Mammary epithelial cell (primary cell): ENCODE measurements at regions of chr2 and their contacts with region 1.

Region 1: DNA sequence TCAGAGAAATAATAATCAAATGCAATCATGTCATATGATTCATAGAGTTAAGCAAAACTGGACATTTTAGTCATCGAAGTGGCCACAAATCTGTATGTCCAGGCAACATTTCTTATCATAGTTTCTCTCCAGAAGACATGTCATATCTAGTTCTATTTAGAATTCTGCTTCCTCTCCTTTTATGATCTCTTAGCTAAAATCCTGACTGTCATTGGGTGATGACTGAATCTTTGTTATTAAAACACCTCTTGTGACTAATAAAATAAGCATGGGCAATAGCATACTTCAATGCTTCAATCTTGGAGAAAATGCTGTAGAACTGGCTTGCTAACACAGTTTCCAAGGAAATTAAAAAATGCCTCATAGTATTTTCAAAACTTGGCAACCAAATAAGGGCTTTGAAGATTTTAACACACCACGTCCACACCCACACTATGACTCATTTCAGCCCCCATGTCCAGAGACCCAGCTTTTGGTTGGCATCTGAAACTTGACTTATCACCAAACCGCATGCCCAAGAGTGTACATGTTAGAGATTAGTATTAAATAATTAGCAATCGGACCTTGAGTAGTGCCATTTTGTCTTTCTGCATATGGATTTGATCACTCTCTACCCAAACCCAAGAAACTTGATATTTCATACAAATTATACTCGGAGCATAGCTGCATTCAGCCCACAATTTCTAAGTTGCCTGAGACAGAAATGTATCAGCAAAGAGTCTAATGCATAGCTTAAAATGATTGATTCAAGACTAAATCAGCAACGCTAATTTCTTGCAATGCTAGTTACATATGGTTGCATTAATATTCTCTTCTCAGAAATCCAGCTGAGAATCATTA is 106.5 kb upstream of the ETAA1 start:
- DNase-seq: peak; percentile 98
- H3K4me3 ChIP-seq: no peak overlapping the region
- H3K27ac ChIP-seq: peak overlapping the region; percentile 97
- H3K4me1 ChIP-seq: peaks cover 23% of the 10 kb centered on the region
- H3K27me3 ChIP-seq: no peaks in the 10 kb centered on the region
- CTCF ChIP-seq: no peak

Region 2: DNA sequence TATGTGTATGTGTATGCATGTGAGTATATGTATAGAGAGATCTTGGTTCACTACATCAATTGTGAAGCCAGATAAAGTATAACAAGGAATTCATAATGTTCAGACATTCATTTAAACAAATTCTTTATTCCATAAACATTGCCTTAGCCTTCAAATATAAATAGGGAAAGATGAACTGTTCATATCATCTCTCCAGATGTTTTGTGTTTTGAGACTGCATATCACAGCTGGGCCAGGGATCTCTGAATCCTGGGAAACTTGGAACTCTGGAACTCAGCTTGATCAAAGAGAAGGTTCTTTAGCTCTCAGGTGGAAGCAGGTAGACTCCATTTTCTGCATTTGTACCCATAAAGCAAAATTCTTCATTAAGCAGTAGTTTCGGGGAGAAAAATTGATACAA is 166.1 kb before region 1 on chr2:
- CTCF ChIA-PET with region 1: no interaction called
- dilution Hi-C with region 1: no loop called
- in situ Hi-C with region 1: no loop called
- intact Hi-C with region 1: no loop called
- DNase-seq: no peak
- H3K4me3 ChIP-seq: no peak overlapping the region
- H3K27ac ChIP-seq: no peak overlapping the region
- H3K4me1 ChIP-seq: no peaks in the 10 kb centered on the region
- H3K27me3 ChIP-seq: peaks cover 3% of the 10 kb centered on the region
- CTCF ChIP-seq: no peak

Region 3: DNA sequence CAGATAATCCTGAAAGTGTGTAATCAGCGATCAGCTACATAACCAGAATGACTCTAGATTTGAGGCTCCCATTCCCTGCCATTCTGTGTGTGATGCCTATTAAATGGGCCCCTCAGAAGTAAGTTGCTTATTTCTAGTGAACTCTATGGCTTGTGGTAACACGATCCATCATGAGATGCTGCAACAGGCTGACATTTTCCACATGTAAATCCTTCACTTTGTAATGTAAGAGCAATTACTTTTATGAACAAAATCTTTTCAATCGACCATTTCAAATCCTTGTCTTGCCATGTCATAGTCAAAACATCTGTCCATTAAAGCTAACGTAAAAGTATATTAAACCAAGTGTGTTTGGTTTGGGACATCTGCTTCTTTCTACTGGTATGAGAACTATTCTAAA is 69.4 kb before region 1 on chr2:
- CTCF ChIA-PET with region 1: no interaction called
- dilution Hi-C with region 1: no loop called
- in situ Hi-C with region 1: no loop called
- intact Hi-C with region 1: no loop called
- DNase-seq: no peak
- H3K4me3 ChIP-seq: no peak overlapping the region
- H3K27ac ChIP-seq: no peak overlapping the region
- H3K4me1 ChIP-seq: no peaks in the 10 kb centered on the region
- H3K27me3 ChIP-seq: no peaks in the 10 kb centered on the region
- CTCF ChIP-seq: no peak

Region 4: GRCh38 chr2:67259581-67260342 is 30.9 kb before region 1 on chr2:
- CTCF ChIA-PET with region 1: no interaction called
- dilution Hi-C with region 1: no loop called
- in situ Hi-C with region 1: no loop called
- intact Hi-C with region 1: loop called (anchors 1 kb)
- DNase-seq: peak; percentile 91
- H3K4me3 ChIP-seq: no peak overlapping the region
- H3K27ac ChIP-seq: peak overlapping the region; percentile 81
- H3K4me1 ChIP-seq: peaks cover 40% of the 10 kb centered on the region
- H3K27me3 ChIP-seq: no peaks in the 10 kb centered on the region
- CTCF ChIP-seq: no peak

Region 5: DNA sequence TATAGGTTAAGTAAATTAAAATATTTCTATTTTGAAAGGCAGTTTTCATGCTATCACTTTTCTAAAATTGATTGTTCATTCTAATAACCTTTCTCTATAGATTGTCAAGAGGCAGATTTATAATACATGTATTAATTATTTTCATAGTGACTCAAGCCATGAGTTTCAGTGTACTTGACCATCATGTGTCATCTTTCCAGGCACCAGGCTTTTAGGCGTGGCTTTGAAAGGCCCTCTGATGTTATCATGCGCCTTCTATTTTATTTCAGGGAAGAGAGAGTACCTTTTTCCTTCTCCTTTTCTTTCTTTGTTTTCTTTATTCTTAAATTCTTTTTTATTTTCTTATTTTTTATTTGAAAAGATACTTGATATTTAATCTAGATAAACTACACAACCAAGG is 21.9 kb before region 1 on chr2:
- CTCF ChIA-PET with region 1: no interaction called
- dilution Hi-C with region 1: no loop called
- in situ Hi-C with region 1: no loop called
- intact Hi-C with region 1: loop called (anchors 1 kb)
- DNase-seq: peak; percentile 89
- H3K4me3 ChIP-seq: no peak overlapping the region
- H3K27ac ChIP-seq: peak overlapping the region; percentile 77
- H3K4me1 ChIP-seq: peaks cover 3% of the 10 kb centered on the region
- H3K27me3 ChIP-seq: no peaks in the 10 kb centered on the region
- CTCF ChIP-seq: no peak

Region 6: DNA sequence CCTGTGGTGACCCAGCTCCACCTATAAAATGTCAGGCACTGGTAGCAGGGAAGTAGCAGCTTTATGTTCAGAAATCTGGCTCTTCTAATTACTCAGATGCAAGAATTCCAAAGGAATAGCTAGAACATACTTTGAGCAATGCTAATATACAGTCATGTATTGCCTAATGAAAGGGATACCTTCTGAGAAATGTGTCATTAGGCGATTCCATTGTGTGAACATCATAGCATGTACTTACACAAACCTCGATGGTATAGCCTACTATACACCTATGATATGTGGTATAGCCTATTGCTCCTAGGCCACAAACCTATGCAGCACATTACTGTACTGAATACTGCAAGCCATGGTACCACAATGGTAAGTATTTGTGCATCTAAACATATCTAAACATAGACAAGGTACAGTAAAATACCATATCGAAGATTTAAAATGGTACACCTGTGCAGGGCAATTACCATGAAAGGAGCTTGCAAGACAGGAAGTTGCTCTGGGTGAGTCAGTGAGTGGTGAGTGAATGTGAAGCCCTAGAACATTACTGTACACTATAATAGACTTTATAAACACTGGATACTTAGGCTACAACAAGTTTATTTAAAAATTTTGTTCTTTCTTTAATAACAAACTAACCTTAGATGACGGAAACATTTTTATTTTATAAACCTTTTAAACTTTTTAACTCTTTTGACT is 56.2 kb after region 1 on chr2:
- CTCF ChIA-PET with region 1: no interaction called
- dilution Hi-C with region 1: no loop called
- in situ Hi-C with region 1: no loop called
- intact Hi-C with region 1: loop called (anchors 1 kb)
- DNase-seq: peak; percentile 75
- H3K4me3 ChIP-seq: no peak overlapping the region
- H3K27ac ChIP-seq: peak overlapping the region; percentile 29
- H3K4me1 ChIP-seq: peaks cover 12% of the 10 kb centered on the region
- H3K27me3 ChIP-seq: no peaks in the 10 kb centered on the region
- CTCF ChIP-seq: no peak

Region 7: GRCh38 chr2:67446491-67446911 is 155.8 kb after region 1 on chr2:
- CTCF ChIA-PET with region 1: no interaction called
- dilution Hi-C with region 1: no loop called
- in situ Hi-C with region 1: no loop called
- intact Hi-C with region 1: no loop called
- DNase-seq: peak; percentile 71
- H3K4me3 ChIP-seq: no peak overlapping the region
- H3K27ac ChIP-seq: peak overlapping the region; percentile 51
- H3K4me1 ChIP-seq: peaks cover 39% of the 10 kb centered on the region
- H3K27me3 ChIP-seq: no peaks in the 10 kb centered on the region
- CTCF ChIP-seq: no peak

Region 8: GRCh38 chr2:68352651-68353391 is 1062.2 kb after region 1 on chr2:
- CTCF ChIA-PET with region 1: no interaction called
- dilution Hi-C with region 1: no loop called
- in situ Hi-C with region 1: no loop called
- intact Hi-C with region 1: no loop called
- DNase-seq: peak; percentile 17
- H3K4me3 ChIP-seq: no peak overlapping the region
- H3K27ac ChIP-seq: no peak overlapping the region
- H3K4me1 ChIP-seq: no peaks in the 10 kb centered on the region
- H3K27me3 ChIP-seq: no peaks in the 10 kb centered on the region
- CTCF ChIP-seq: no peak